ENCODE measurements at regions of chr3 and their contacts with region 1.

Region 1: DNA sequence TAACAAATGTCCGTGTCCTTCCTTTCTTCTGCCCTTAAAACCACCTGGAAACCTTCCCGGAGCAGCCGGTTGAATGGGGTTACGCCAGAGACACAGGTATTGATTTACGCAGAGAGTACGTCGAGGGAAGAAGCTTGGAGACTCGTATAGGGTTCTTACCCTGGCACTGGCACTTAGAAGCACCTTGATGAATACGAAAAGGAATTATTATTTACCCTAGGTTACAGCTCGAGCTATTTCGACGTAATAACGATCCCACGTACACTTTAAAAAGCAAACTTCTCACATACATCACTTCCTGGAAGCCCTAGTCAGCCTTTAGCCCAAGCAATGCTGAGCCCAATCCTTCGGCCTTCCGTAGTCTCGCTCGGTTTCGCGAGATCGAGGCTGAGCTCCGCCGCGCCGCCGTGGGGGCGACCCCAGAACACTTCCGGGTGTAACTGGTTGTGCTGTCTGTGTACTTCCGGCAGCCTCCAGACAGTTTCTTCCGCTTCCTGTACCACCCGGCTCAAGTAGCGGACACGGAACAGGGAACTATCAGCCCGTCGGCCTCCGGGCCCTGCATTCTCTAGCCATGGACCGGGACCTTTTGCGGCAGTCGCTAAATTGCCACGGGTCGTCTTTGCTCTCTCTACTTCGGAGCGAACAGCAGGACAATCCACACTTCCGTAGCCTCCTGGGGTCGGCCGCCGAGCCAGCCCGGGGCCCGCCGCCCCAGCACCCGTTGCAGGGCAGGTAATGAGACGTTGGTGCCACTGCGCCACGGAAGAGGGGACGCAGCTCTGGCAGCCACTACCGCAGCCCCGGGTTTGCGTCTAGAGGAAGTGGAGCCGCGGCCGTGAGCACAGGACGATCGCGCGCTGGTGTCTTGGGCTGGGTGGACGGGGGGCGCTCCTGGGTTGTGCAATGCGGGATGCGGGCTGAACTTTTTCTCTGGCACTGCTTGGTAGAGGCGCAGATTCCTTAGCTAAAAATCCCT is at the start of gene TTC14:
- DNase-seq: peak; percentile 96
- H3K4me3 Mint-ChIP-seq: peak within 1 kb of the TSS; percentile 92
- H3K27ac Mint-ChIP-seq: peak within 1 kb of the TSS; percentile 95
- H3K4me1 Mint-ChIP-seq: peaks cover 19% of the 10 kb centered on the region
- H3K27me3 Mint-ChIP-seq: peaks cover 3% of the 10 kb centered on the region
- total RNA-seq, gene TTC14: 43.9 to 44.4 TPM

Region 2: DNA sequence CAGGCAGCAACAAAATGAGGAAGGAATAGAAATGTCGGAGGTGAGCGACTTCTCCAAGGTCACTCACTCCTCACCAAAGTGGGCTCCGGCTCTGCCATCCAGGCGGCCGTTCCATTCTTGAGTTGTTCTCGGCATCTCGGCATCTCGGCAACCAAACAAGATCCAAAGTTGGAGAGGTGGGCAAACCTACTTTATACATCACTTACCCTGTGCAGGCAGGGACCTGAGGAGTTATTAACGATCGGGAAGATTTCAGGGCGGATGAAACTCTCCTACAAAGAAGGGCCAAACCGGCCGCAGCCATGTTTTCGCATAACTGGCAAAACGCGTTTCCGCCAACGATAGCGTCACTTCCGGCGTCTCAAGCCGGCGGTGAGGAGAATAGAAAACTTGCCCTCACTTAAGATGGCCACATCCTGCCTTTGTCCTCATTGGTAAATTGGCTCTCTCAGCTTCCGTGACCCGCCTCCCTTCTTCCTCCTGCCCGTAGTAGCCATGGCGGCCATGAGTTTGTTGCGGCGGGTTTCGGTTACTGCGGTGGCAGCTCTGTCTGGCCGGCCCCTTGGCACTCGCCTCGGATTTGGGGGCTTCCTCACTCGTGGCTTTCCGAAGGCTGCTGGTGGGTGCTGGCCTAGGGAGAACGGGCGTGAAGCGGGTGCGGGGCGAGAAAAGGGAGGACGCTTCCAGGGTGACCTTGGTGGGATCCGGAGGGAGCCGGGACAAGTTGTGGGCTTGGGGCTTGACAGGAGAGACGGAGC is 997.5 kb before region 1 on chr3 and contains the starts of genes MRPL47 and NDUFB5:
- CTCF ChIA-PET with region 1: no interaction called
- POLR2A ChIA-PET with region 1: no interaction called
- intact Hi-C with region 1: loop called (anchors 2 kb)
- DNase-seq: peak; percentile 96
- H3K4me3 Mint-ChIP-seq: peak within 1 kb of the TSS; percentile 99
- H3K27ac Mint-ChIP-seq: peak within 1 kb of the TSS; percentile 98
- H3K4me1 Mint-ChIP-seq: peaks cover 40% of the 10 kb centered on the region
- H3K27me3 Mint-ChIP-seq: no peaks in the 10 kb centered on the region
- total RNA-seq, gene MRPL47: 51.4 to 54.0 TPM
- total RNA-seq, gene NDUFB5: 133 to 147 TPM

Region 3: GRCh38 chr3:179811321-179812095 is 790.5 kb before region 1 on chr3:
- CTCF ChIA-PET with region 1: no interaction called
- POLR2A ChIA-PET with region 1: no interaction called
- intact Hi-C with region 1: loop called (anchors 10 kb)
- DNase-seq: peak; percentile 27
- H3K4me3 Mint-ChIP-seq: no peak overlapping the region
- H3K27ac Mint-ChIP-seq: no peak overlapping the region
- H3K4me1 Mint-ChIP-seq: peaks cover 4% of the 10 kb centered on the region
- H3K27me3 Mint-ChIP-seq: no peaks in the 10 kb centered on the region

Region 4: DNA sequence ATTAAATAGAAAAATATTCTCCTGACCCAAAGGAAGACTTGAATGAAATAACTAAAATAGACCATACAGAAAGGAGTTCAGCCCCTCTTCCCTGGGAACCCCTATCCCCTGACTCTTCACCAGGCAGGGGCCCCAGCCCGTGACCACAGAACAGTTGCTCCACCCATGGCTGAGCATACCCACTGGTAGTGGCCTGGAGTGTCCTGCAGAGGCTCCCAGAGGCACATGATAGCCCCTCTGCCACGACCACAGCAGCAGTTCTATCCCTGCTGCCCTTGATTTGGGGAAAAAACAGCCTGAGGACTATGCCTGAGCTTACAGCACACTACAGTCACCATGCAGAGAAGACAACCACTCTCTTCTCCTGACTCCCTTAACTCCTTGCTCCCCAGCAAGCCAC is 31.7 kb after region 1 on chr3:
- CTCF ChIA-PET with region 1: no interaction called
- POLR2A ChIA-PET with region 1: interaction called, 3 read pairs
- intact Hi-C with region 1: loop called (anchors 1 kb)
- DNase-seq: no peak
- H3K4me3 Mint-ChIP-seq: no peak overlapping the region
- H3K27ac Mint-ChIP-seq: no peak overlapping the region
- H3K4me1 Mint-ChIP-seq: peaks cover 5% of the 10 kb centered on the region
- H3K27me3 Mint-ChIP-seq: peaks cover 35% of the 10 kb centered on the region

Region 5: DNA sequence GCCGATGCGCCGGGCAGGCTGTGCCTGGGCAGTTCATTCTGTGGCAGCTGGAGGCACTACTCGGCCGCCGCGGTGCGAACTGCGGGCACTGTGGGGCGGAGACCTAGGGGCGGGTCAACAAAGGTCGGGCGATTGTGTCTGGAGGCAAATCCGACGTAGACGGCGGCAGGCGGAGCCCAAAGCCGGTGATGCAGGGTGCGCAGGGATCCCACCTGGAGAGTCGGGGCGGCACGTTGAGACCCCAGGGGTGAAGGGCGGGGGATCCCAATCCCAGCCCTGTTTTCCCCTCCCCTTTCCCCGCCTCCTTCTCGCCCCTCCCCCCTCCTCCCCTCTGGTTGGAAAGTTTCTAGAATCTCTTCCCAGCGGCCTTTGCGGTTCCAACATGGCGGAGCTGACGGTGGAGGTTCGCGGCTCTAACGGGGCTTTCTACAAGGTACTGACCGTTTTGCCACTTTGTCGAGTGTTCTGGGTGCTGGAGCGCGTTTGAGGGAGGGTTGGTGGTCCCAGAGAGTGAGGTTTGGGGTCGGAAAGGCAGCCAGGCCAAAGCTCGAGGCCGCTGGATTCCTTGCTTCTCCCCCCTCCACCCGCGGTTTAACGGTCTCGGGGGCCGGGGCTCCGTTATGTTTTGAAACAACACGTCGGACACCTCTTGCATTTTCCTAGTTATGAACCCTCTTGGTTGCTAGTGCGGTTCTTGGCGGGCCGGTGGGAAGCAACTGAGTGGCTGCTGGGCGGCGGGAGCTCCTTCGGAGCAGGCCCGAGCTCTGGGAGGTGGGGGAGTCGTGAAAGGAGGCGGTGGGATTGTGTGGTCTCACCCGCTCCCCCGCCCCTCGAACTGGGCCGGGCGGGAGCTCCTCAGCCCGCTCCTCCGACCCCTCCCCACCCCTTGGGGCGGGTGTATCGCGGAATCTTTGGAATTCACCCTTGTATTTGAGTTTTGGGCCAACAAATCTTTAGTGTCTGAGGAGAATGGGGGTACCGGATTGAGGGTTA is 310.6 kb after region 1 on chr3 and contains the start of gene FXR1:
- CTCF ChIA-PET with region 1: interaction called, 3 read pairs
- POLR2A ChIA-PET with region 1: interaction called, 3 read pairs
- intact Hi-C with region 1: loop called (anchors 1 kb)
- DNase-seq: peak; percentile 96
- H3K4me3 Mint-ChIP-seq: peak within 1 kb of the TSS; percentile 94
- H3K27ac Mint-ChIP-seq: peak within 1 kb of the TSS; percentile 97
- H3K4me1 Mint-ChIP-seq: peaks cover 51% of the 10 kb centered on the region
- H3K27me3 Mint-ChIP-seq: no peaks in the 10 kb centered on the region
- total RNA-seq, gene FXR1: 165 to 169 TPM